Activated B cell treated with CpG ODN at 0.5 μM for 24 hours (primary cell): ENCODE measurements at regions of chr10 and their contacts with region 1.

Region 1: DNA sequence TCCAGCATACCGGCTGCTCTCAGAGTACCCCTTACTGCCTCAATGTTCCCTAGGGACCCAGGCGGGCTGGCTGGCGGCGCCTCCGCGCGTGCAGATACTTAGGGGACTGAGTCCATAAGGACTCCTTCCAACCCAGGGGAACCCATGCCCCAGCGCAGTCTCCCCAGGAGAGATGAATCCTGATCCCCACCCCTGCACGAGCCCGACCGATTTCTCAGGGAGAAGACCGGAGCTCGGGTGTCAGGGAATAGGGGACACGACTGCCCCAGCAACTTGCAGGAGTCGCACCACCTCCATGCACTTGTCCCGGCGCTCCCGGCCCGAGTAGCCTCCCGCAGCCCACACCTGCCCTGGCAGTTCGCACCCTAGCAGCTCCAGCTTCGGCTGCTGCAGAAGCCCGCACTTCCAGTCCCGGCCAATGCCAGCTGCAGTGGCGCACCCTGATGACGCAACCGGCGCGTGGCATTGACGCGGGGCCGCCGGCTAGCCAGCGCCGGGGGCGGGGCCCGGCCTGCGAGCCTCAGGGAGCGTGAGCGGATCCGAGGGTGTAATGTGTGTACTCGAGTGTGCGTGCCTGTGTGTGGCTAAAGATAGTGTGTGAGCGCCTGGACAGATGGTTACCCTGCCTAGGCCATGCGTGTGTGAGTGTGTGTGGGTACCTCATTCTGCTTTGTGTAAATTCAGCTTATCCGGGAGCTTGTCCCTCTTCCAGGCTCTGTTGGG is at the start of gene GPAM:
- DNase-seq: peak; percentile 100
- ATAC-seq: peak; percentile 95
- H3K4me3 Mint-ChIP-seq: peak within 1 kb of the TSS; percentile 91
- H3K27ac Mint-ChIP-seq: peak within 1 kb of the TSS; percentile 93
- H3K4me1 Mint-ChIP-seq: peaks cover 21% of the 10 kb centered on the region
- H3K27me3 Mint-ChIP-seq: no peaks in the 10 kb centered on the region
- CTCF ChIP-seq: no peak
- total RNA-seq, gene GPAM: 8.6 and 10.2 TPM in 2 replicates

Region 2: DNA sequence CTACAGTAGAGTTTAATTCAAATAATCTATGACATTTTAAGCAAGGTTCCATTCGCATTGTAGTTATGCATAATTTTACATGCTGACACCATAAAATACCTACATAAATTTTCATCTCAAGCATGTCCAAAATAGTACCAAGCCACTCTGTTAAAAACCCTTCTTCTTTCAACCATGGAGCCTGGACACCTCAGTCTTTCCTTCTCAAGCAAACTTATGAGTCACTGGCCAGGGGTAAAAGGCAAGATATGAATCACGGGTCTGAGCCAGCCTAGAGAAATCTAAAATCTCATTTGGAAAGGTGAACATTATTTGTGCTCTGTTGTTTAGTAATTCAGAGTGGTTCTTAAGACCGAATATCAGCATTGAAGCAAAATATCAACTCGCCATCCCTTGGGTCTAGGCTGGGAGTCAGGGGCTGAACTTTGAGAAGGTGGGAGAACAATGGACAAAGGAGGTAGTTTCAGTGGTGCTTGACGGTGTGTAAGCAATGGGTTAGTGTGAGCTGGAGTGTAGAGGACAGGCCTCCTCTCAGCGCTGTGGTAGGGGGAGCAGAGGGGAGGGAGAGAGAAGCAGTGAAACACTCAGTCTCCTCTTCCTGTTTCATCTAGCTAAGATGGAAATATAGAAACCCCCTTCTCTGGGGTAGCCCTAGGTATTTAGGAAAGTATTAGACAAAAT is 19.2 kb after region 1 on chr10:
- CTCF ChIA-PET with region 1: no interaction called
- POLR2A ChIA-PET with region 1: interaction called, 7 read pairs
- intact Hi-C with region 1: loop called (anchors 1 kb)
- DNase-seq: no peak
- ATAC-seq: peak; percentile 74
- H3K4me3 Mint-ChIP-seq: peak overlapping the region; percentile 52
- H3K27ac Mint-ChIP-seq: peak overlapping the region; percentile 88
- H3K4me1 Mint-ChIP-seq: peaks cover 25% of the 10 kb centered on the region
- H3K27me3 Mint-ChIP-seq: no peaks in the 10 kb centered on the region
- CTCF ChIP-seq: no peak

Region 3: DNA sequence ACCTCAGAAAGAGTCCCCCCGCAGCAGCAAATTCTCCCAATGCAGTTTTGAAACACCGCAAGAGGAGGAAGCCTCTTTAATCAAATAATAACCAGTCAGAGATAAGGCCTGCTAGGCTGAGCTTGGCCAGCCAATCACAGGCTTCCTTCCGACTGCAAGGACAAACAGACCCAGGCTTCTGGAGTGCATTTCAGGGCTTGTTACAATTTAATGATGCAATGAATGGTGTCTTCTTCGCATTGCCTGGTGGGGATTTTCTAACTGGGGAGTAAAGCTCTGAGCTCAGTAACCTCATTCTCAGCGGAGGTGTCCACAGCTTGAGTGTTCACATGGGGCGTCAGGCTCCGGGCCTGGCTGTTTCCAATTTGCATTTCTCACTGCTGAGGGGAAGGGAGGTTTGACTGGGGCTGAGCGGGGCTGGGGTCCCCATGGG is 31.9 kb after region 1 on chr10:
- CTCF ChIA-PET with region 1: no interaction called
- POLR2A ChIA-PET with region 1: interaction called, 12 read pairs
- intact Hi-C with region 1: loop called (anchors 1 kb)
- DNase-seq: no peak
- ATAC-seq: peak; percentile 61
- H3K4me3 Mint-ChIP-seq: peak overlapping the region; percentile 33
- H3K27ac Mint-ChIP-seq: peak overlapping the region; percentile 79
- H3K4me1 Mint-ChIP-seq: peaks cover 39% of the 10 kb centered on the region
- H3K27me3 Mint-ChIP-seq: no peaks in the 10 kb centered on the region
- CTCF ChIP-seq: no peak

Region 4: GRCh38 chr10:112314822-112315474 is 131.5 kb after region 1 on chr10:
- CTCF ChIA-PET with region 1: no interaction called
- POLR2A ChIA-PET with region 1: no interaction called
- intact Hi-C with region 1: loop called (anchors 2 kb)
- DNase-seq: peak; percentile 34
- ATAC-seq: peak; percentile 62
- H3K4me3 Mint-ChIP-seq: no peak overlapping the region
- H3K27ac Mint-ChIP-seq: no peak overlapping the region
- H3K4me1 Mint-ChIP-seq: no peaks in the 10 kb centered on the region
- H3K27me3 Mint-ChIP-seq: peaks cover 12% of the 10 kb centered on the region
- CTCF ChIP-seq: peak; percentile 31

Region 5: DNA sequence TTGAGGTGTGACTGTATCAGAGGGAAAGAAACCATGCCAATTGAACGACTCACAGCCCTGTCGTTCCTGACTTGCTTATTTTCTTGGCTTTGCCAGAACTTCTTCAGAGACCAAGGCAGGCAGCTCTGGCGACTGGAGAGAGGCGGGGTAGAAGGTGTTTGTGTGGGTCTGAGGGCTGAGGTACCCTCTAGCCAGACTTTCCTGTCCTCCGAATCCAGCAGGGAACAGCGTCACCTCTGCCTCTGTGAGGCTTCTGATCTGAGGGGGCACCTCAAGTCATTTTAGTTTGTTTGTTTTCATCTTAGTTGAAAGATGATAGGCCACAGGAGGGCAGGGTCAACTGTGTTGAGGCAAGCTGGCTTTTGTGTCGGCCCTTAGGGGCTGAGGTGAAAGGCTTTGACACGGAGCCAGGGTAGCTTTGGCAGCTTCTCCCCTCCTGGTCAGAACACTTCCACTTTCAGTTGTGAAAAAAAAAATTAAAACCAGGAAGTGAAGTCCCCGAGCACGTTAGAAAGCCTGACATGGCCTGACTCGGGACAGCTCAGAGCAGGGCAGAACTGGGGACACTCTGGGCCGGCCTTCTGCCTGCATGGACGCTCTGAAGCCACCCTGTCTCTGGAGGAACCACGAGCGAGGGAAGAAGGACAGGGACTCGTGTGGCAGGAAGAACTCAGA is 192.4 kb after region 1 on chr10:
- CTCF ChIA-PET with region 1: no interaction called
- POLR2A ChIA-PET with region 1: interaction called, 11 read pairs
- intact Hi-C with region 1: loop called (anchors 1 kb)
- DNase-seq: peak; percentile 47
- ATAC-seq: peak; percentile 85
- H3K4me3 Mint-ChIP-seq: peak overlapping the region; percentile 100
- H3K27ac Mint-ChIP-seq: peak overlapping the region; percentile 99
- H3K4me1 Mint-ChIP-seq: peaks cover 61% of the 10 kb centered on the region
- H3K27me3 Mint-ChIP-seq: no peaks in the 10 kb centered on the region
- CTCF ChIP-seq: no peak

Region 6: GRCh38 chr10:112434988-112435619 is 251.6 kb after region 1 on chr10:
- CTCF ChIA-PET with region 1: interaction called, 11 read pairs
- POLR2A ChIA-PET with region 1: no interaction called
- intact Hi-C with region 1: loop called (anchors 5 kb)
- DNase-seq: no peak
- ATAC-seq: no peak
- H3K4me3 Mint-ChIP-seq: no peak overlapping the region
- H3K27ac Mint-ChIP-seq: no peak overlapping the region
- H3K4me1 Mint-ChIP-seq: no peaks in the 10 kb centered on the region
- H3K27me3 Mint-ChIP-seq: no peaks in the 10 kb centered on the region
- CTCF ChIP-seq: no peak

Region 7: DNA sequence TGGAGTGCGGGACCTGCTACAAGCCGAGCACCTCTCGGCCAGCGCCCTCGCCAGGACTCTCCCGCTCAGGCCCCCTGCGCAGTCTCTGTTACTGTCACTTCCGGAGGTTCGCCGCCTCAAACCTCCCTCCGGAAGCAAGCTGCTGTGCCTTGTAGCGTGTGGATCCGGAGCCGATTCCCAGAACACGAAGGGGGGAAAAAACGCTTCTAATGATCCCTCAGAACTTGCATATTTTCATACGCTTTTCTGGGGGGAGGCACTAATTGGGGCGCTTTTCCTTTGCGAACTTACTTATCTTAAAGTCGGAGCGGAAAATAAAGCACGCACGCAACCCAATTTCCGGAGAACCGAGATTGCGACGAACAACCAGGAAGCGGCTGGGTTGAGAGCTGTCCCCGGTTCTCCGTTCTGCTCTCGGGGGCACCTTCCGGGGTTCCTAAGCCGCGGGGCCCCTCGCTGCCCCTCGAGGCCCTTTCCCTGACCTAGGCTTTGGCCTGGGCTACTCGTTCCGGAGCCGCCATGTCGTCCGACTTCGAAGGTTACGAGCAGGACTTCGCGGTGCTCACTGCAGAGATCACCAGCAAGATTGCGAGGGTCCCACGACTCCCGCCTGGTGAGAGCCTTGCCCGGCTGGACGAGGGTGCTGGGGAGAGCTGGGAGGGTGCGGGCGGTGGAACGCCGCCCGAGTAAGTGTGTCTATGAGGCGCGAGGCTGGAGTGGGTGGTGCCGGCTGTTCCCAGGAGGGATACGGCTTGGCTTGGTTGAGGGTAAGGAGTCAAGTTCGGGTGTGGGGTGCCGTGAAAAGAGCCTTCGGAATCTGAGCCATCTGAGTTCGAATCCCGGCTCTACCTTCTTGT is 263.6 kb after region 1 on chr10 and contains the starts of genes VTI1A and ZDHHC6:
- CTCF ChIA-PET with region 1: interaction called, 3 read pairs
- POLR2A ChIA-PET with region 1: interaction called, 11 read pairs
- intact Hi-C with region 1: loop called (anchors 1 kb)
- DNase-seq: peak; percentile 81
- ATAC-seq: peak; percentile 88
- H3K4me3 Mint-ChIP-seq: peak within 1 kb of the TSS; percentile 89
- H3K27ac Mint-ChIP-seq: peak within 1 kb of the TSS; percentile 90
- H3K4me1 Mint-ChIP-seq: peaks cover 44% of the 10 kb centered on the region
- H3K27me3 Mint-ChIP-seq: no peaks in the 10 kb centered on the region
- CTCF ChIP-seq: no peak
- total RNA-seq, gene VTI1A: 56.9 and 74.0 TPM in 2 replicates
- total RNA-seq, gene ZDHHC6: 37.1 and 44.5 TPM in 2 replicates